ENCODE measurements at regions of chr6 and their contacts with region 1.

Region 1: GRCh38 chr6:105733565-105734162 is 330.8 kb upstream of the PREP start:
- DNase-seq: no peak
- ATAC-seq: no peak
- H3K4me3 Mint-ChIP-seq: no peak overlapping the region
- H3K27ac Mint-ChIP-seq: no peak overlapping the region
- H3K4me1 Mint-ChIP-seq: no peaks in the 10 kb centered on the region
- H3K27me3 Mint-ChIP-seq: peaks cover 2% of the 10 kb centered on the region

Region 2: GRCh38 chr6:105431226-105431625 is 302.4 kb before region 1 on chr6:
- CTCF ChIA-PET with region 1: interaction called, 13 read pairs
- POLR2A ChIA-PET with region 1: no interaction called
- intact Hi-C with region 1: loop called in 1 of 2 experiments (anchors 5 kb)
- DNase-seq: no peak
- ATAC-seq: no peak
- H3K4me3 Mint-ChIP-seq: no peak overlapping the region
- H3K27ac Mint-ChIP-seq: no peak overlapping the region
- H3K4me1 Mint-ChIP-seq: no peaks in the 10 kb centered on the region
- H3K27me3 Mint-ChIP-seq: peaks cover 6% of the 10 kb centered on the region

Region 3: GRCh38 chr6:105484238-105485161 is 249.2 kb before region 1 on chr6:
- CTCF ChIA-PET with region 1: interaction called, 4 read pairs
- POLR2A ChIA-PET with region 1: no interaction called
- intact Hi-C with region 1: loop called (anchors 2 to 5 kb)
- DNase-seq: no peak
- ATAC-seq: peak; percentile 59
- H3K4me3 Mint-ChIP-seq: no peak overlapping the region
- H3K27ac Mint-ChIP-seq: peak overlapping the region; percentile 16
- H3K4me1 Mint-ChIP-seq: peaks cover 18% of the 10 kb centered on the region
- H3K27me3 Mint-ChIP-seq: peaks cover 11% of the 10 kb centered on the region

Region 4: GRCh38 chr6:105992315-105992961 is 258.8 kb after region 1 on chr6:
- CTCF ChIA-PET with region 1: interaction called, 3 read pairs
- POLR2A ChIA-PET with region 1: no interaction called
- intact Hi-C with region 1: loop called in 1 of 2 experiments (anchors 5 kb)
- DNase-seq: peak; percentile 94
- ATAC-seq: peak; percentile 93
- H3K4me3 Mint-ChIP-seq: peak overlapping the region; percentile 88
- H3K27ac Mint-ChIP-seq: peak overlapping the region; percentile 91
- H3K4me1 Mint-ChIP-seq: peaks cover 32% of the 10 kb centered on the region
- H3K27me3 Mint-ChIP-seq: peaks cover 61% of the 10 kb centered on the region

Region 5: DNA sequence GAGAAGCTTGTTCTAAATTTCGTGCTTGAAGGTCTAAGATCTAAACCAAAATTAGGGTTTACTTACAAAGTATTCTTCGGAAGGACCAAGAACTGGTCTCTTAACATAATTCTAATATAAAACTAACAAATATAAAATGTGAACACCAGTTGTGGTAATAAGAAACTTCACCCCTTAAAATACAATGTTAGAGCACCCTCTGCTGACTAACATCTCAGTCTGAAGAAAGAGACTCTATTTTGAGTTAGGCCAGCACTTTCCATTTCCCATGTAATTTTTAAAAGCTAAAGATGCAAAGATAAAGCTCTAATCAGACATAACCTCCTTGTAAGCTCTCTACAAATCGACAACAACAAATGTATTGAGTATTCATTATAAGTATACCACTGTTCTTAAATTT is 567.3 kb after region 1 on chr6:
- CTCF ChIA-PET with region 1: interaction called, 5 read pairs
- POLR2A ChIA-PET with region 1: no interaction called
- intact Hi-C with region 1: loop called (anchors 1 to 2 kb)
- DNase-seq: no peak
- ATAC-seq: no peak
- H3K4me3 Mint-ChIP-seq: no peak overlapping the region
- H3K27ac Mint-ChIP-seq: no peak overlapping the region
- H3K4me1 Mint-ChIP-seq: peaks cover 7% of the 10 kb centered on the region
- H3K27me3 Mint-ChIP-seq: no peaks in the 10 kb centered on the region

Region 6: DNA sequence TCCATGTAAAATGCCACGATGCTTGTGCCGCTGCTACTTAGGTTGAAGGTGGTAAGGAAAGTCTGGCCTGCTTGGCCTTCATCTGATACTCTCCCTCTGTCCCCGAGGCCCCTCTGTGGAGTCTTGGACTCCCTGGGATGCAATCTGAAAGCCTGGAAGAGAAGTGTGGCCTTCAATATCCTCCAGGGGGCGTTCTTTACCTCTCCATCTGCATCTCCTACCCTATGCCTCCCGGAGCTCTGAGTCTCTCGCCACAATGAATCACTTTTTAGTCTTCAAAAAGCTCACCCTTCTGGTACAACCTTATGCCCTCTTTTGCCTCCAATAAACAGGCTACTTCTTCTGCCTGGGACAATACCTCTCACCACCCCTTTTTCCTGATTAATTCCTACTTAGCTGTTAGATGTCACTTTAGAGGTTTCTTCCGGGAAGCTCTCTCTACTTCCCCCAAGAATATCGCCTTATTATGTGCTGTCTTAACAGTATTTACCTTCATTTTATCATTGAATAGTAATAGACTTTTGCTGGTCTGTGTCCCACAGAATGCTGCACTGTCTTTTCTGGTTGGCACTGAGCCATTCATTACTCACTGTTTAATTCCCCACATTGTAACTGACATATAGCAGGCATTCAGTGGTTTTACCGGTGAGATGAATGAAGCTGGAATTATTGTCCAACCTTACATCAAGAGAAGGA is 605.8 kb after region 1 on chr6:
- CTCF ChIA-PET with region 1: no interaction called
- POLR2A ChIA-PET with region 1: no interaction called
- intact Hi-C with region 1: no loop called
- DNase-seq: peak; percentile 68
- ATAC-seq: peak; percentile 98
- H3K4me3 Mint-ChIP-seq: no peak overlapping the region
- H3K27ac Mint-ChIP-seq: no peak overlapping the region
- H3K4me1 Mint-ChIP-seq: peaks cover 5% of the 10 kb centered on the region
- H3K27me3 Mint-ChIP-seq: peaks cover 34% of the 10 kb centered on the region